Cardiac septum (tissue), 1 donor: ENCODE measurements at regions of chr6 and their contacts with region 1.

Region 1: GRCh38 chr6:154653853-154654252 is 79.4 kb upstream of the SCAF8 start:
- DNase-seq: no peak

Region 2: GRCh38 chr6:154500769-154501577 is 152.9 kb before region 1 on chr6:
- intact Hi-C with region 1: loop called (anchors 5 kb)
- DNase-seq: no peak

Region 3: GRCh38 chr6:154515826-154516225 is 138.0 kb before region 1 on chr6:
- intact Hi-C with region 1: loop called (anchors 5 kb)
- DNase-seq: no peak